Cardiac septum (tissue), 1 donor: ENCODE measurements at regions of chrX and their contacts with region 1.

Region 1: GRCh38 chrX:115940888-115941332 is 229.6 kb upstream of the AGTR2 start:
- DNase-seq: no peak

Region 2: DNA sequence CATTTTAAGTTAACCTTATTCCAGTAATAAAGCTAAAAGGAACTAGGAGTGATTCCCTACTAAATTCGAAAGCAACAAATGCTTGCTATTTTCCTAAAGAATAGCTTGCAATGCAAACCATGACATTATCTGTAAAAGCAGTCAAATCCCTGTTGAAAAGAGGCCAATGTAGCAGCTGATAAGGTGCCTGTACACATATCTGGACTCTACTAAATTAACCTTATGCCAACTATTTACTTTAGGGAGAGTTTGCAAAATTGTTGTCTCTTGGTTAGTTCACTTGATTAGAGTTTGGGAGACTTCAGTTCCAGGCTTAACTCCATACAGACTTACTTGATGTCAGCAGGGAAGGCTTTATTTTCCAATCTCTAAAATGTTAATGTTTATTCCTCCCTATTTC is 929.5 kb before region 1 on chrX:
- intact Hi-C with region 1: no loop called
- DNase-seq: no peak

Region 3: GRCh38 chrX:115892787-115893671 is 47.9 kb before region 1 on chrX:
- intact Hi-C with region 1: loop called (anchors 10 kb)
- DNase-seq: peak; percentile 77